GM10248 (cell line): ENCODE measurements at regions of chr14 and their contacts with region 1.

Region 1: GRCh38 chr14:22570132-22570949 is 18.7 kb downstream of the DAD1 start:
- DNase-seq: peak; percentile 81
- CTCF ChIP-seq: peak; percentile 93

Region 2: GRCh38 chr14:22386924-22387775 is 183.2 kb before region 1 on chr14:
- CTCF ChIA-PET with region 1: interaction called, 111 read pairs
- POLR2A ChIA-PET with region 1: no interaction called
- DNase-seq: peak; percentile 79
- CTCF ChIP-seq: peak; percentile 76

Region 3: DNA sequence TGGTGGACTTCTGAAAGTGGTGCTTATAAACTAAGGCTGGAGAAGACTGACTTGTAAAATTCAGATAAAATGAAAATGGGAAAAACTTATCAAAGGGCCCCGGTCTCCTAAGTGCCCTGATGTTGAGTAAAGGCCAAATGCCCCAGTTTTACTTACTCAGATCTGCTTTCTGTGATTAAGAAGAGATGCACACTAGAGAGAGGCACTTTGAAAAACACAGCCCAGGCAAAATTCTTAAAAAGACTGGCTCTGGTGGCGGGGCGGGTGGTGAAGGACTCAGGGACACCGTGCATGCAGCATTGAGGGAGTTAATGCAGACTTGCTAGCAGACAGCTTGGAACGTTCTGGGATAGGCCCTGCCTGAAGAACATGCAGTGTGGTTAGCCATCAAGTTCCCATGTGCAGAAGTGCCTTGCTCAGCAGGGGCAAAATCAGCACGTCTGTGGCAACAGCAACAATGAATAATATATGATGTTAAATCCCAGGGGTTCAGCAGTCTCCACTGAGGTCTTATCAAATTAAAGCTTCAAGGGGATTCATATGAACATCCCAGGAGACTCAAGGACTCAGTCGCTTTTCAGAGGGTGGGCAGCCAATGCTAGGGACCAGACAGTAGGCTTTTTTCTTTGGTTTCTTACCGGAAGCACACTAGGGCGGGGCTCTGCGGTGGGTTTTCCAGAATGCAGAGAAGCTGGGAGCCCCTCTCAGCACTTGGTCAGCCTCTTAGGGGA is 86.3 kb before region 1 on chr14:
- CTCF ChIA-PET with region 1: interaction called, 57 read pairs
- POLR2A ChIA-PET with region 1: no interaction called
- DNase-seq: no peak
- CTCF ChIP-seq: no peak

Region 4: GRCh38 chr14:22536853-22537338 is 33.4 kb before region 1 on chr14:
- CTCF ChIA-PET with region 1: interaction called, 21 read pairs
- POLR2A ChIA-PET with region 1: no interaction called
- DNase-seq: peak; percentile 77
- CTCF ChIP-seq: no peak

Region 5: DNA sequence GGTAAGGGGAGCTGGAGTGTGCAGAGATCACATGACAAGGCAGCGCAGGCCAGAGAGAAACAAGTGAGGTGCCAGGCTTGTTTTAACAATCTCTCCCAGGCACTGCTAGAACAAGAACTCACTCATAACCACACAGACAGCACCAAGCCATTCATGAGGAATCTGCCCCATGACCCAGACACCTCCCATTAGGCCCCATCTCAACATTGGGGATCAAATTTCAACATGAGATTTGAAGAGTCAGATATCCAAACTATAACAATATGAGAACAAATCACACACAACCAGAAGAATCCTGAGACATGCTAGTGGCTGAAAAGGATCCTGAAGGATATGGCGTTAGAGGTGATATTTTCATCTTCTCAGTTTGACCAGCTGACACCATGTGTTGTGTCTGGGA is 51.9 kb after region 1 on chr14:
- CTCF ChIA-PET with region 1: no interaction called
- POLR2A ChIA-PET with region 1: no interaction called
- DNase-seq: no peak
- CTCF ChIP-seq: no peak

Region 6: DNA sequence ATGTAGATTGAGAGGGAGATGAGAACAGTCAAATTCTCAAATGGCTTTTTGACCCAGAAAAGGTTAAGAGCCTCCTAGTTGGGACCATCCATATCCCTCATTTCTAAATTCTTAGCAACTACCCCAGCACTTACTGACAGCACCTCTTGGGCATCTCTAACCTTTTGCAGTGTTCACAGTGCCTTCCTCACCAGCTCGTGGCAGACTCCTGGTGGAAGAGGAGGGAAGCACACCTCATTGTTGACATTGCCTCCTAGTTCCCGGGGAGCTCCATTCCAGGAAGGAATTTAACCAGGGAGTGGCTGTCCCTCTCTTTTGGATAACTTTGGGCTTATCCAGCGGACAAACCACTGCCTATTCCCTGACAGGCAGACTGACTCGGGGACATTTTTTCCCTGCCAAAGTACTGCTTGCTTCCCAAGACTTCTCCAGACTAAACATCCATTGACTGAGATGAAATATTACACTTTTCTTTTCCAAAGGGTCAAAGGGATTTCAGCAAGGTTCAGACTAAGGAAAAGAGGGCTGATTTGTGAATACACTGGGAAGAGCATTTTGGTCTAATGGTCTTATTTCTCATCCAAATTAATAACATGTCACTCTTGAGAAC is 82.8 kb after region 1 on chr14:
- CTCF ChIA-PET with region 1: interaction called, 108 read pairs
- POLR2A ChIA-PET with region 1: no interaction called
- DNase-seq: peak; percentile 68
- CTCF ChIP-seq: peak; percentile 81

Region 7: DNA sequence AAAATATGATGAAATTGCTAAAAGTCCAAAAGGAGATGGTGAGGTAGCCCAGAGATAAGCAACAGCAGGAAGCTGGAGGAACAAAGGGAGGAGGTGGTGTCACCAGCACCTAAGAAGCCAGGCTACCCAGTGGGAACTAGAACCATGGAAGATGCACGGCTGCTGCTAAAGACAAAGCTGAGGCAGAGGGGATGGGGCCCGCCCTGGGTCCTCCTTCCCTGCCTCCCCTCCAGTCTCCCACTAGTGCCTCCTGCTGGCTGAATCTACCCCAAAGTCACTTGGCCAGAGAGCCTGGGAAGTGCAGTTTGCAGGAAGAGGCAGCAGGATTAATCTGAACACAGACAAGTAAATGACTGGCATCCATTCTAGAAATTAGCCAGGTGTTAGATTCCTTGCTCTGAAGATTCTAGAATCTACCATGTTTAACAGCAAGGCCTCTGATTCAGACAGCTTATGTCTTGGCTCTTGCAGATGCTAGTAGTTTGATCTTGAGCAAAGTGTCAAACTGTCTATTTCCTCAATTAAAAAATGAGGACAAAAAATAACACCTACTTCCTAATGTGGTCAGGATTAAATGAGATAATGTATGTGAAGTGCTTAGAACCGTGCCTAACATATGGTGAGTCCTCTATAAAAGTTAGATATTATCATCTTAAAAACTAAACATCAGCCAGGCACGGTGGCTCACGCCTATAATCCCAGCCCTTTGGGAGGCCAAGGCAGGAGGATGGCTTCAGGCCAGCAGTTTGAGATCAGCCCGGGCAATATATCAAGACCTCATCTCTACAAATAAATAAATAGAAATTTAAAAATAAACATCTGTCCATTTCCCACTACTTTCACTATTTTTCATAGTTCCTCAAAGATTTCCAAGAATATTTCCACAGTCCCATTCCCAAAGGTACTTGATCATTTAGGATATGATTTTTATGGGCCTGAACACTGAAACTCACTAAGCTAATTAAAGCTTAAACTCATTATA is 295.4 kb after region 1 on chr14:
- CTCF ChIA-PET with region 1: interaction called, 12 read pairs
- POLR2A ChIA-PET with region 1: no interaction called
- DNase-seq: no peak
- CTCF ChIP-seq: no peak

Region 8: DNA sequence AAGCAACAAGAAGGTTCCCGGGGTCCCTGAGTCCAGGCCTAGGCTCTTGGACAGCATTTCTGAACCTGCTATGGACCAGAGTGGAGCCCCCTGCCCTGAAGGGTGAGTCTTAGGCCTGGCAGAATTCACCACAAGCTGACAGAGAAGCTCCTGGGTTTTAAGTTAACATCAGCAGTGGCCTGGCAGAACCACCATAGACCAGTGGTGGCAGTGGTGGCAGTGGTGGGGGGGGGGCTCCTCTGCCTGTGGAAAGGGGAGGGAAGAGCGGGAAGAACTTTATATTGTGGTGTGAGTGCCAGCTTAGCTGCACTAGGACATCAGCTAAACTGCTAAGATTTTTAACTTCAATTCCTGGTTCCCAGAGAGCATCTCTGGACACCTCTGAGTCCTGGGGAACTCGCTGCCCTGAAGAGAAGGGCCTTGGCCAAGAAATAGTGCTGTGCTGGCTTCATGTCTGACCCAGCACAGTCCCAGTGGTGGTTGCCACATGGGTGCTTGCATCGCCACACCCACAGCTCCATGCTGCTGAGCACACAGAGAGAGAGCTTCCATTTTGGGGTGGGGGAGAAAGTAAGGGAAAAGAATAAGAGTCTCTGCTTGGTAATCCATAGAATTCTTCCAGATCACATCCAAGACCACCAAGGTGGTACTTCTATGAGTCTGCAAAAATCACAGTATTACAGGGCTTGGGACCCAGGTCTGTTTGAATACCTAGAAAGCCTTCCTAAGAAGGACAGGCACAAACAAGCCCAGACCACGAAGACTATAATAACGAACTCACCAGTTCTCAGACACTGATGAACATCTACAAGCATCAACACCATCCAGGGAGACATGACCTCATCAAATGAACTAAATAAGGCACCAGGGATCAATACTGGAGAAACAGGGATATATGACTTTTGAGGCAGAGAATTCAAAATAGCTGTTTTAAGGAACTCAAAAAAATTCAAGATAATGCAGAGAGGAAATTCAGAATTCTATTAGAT is 647.0 kb after region 1 on chr14:
- CTCF ChIA-PET with region 1: no interaction called
- POLR2A ChIA-PET with region 1: no interaction called
- DNase-seq: no peak
- CTCF ChIP-seq: no peak

Region 9: GRCh38 chr14:23307687-23308644 is 737.6 kb after region 1 on chr14:
- CTCF ChIA-PET with region 1: no interaction called
- POLR2A ChIA-PET with region 1: no interaction called
- DNase-seq: no peak
- CTCF ChIP-seq: no peak